ENCODE measurements at regions of chr1 and their contacts with region 1.

Region 1: GRCh38 chr1:160018900-160019299 is 12.9 kb downstream of the PIGM start:
- H3K4me3 ChIP-seq: no peak overlapping the region
- H3K27ac ChIP-seq: no peak overlapping the region
- H3K4me1 ChIP-seq: peaks cover 15% of the 10 kb centered on the region
- CTCF ChIP-seq: no peak

Region 2: GRCh38 chr1:159936273-159936904 is 82.5 kb before region 1 on chr1:
- CTCF ChIA-PET with region 1: interaction called, 13 read pairs
- POLR2A ChIA-PET with region 1: no interaction called
- H3K4me3 ChIP-seq: no peak overlapping the region
- H3K27ac ChIP-seq: no peak overlapping the region
- H3K4me1 ChIP-seq: no peaks in the 10 kb centered on the region
- CTCF ChIP-seq: peak; percentile 96

Region 3: DNA sequence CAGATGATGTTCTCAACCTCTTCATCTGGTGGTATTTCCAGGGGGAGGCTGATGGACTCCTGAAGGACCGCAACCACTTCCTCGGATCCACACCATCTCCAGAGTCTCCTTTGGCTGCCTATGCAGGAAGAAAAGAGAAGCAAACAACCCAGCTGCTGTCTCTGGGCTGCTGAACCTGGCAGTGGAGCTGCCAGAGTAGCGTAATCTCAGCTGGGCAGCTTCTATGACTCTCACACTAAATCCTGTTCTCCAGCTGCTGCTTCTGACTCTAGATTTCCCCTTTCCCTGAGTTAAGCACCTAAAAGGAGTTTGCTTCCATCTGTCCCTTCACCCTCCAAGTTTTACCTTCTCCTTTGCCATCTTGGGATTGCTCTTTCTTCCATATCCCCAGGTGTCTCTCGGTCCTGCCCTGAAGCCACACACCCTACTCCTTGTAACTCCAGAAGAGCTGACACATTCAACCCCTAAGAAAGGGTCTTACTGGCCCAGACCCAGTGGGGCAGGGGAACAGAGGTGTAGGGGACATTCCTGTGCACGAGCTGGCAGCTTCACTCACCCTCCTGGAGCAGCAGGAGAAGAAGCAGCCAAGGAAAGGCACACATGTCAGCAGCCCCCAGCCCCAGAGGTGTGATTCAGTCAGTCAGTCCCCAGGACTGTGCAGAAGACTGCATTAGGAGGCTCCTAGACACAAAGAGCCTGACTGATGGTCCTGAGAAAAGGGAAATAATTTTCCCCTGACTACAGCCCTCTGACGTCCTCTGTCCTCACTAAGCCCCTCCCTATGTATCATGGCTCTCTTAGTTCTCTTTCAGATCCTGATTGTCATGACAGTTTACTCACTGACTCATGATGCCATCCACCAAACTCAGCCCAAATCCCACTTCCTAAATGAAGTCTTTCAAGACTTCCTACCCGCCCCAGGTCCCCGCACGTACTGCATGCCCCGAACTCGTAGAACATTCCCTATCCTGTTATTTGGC is 65.1 kb before region 1 on chr1 and contains the start of gene SLAMF9:
- CTCF ChIA-PET with region 1: no interaction called
- POLR2A ChIA-PET with region 1: no interaction called
- H3K4me3 ChIP-seq: no peak within 1 kb of the TSS
- H3K27ac ChIP-seq: no peak within 1 kb of the TSS
- H3K4me1 ChIP-seq: no peaks in the 10 kb centered on the region
- CTCF ChIP-seq: no peak

Region 4: DNA sequence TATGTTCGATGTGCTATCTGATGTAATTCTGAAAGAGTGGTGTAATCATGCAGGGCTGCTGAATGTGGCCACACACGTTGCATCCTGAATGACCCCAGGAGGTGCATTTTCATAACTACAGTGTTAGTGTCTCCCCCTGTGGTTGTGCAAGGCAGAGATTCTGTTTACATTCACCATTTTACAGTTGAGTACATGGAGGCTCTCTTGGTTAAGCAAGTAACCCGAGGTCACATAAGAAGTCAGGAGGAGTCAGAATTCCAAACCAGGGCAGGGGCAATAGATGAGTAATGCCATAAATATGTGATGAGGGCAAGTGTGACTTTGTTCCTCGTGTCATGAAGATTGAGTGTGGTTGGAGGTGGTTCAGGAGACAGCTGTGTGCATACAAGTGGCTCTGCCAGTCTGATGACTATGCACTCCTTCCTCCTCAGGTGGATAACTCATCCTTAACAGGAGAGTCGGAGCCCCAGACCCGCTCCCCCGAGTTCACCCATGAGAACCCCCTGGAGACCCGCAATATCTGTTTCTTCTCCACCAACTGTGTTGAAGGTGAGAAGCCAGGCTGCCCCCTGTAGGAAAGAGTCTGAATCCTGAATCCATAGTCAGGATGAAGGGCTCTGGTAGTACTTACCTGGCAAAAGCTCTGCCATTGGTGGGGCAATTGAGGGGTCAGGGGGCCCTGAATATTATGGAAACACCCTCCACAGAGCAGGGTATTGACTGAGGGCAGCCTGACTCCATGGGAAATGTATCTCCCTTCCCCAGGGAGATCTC is 106.0 kb after region 1 on chr1:
- CTCF ChIA-PET with region 1: no interaction called
- POLR2A ChIA-PET with region 1: no interaction called
- H3K4me3 ChIP-seq: no peak overlapping the region
- H3K27ac ChIP-seq: no peak overlapping the region
- H3K4me1 ChIP-seq: no peaks in the 10 kb centered on the region
- CTCF ChIP-seq: no peak

Region 5: DNA sequence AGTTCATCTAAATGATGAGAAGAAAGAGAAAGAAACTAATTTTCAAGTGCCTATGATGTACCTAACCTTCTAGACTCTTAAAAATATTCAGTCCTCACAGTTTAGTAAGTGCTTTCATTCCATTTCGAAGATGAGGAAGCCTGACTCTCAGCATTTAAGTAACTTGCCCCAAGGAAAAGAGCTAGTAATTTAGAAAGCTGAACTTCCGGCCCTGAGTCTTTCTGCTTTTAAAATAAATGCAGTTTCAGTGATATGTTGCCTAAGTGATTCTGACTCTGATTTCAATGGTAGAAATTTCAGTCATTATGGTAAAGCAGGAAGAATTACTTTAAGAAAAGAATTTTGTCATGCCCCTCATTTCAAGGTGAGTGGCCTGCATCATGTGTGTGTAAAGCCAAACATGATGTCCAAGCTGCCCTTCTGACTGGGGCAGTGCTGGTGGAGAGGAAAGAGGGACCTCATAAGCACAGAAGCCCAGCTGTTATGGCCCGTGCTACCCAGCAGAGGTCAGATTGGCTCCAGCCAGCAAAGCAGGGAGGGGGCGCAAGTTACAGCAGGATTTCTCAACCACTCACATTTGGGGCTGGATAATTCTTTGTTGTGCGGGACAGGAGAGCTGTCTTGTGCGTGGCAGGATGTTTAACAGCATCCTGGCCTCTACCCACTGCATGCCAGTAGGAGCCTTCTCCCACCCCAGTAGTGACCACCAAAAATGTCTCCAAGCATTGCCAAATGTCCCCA is 143.2 kb after region 1 on chr1:
- CTCF ChIA-PET with region 1: no interaction called
- POLR2A ChIA-PET with region 1: no interaction called
- H3K4me3 ChIP-seq: no peak overlapping the region
- H3K27ac ChIP-seq: no peak overlapping the region
- H3K4me1 ChIP-seq: no peaks in the 10 kb centered on the region
- CTCF ChIP-seq: peak; percentile 56